ENCODE measurements at regions of chr2 and their contacts with region 1.

Region 1: DNA sequence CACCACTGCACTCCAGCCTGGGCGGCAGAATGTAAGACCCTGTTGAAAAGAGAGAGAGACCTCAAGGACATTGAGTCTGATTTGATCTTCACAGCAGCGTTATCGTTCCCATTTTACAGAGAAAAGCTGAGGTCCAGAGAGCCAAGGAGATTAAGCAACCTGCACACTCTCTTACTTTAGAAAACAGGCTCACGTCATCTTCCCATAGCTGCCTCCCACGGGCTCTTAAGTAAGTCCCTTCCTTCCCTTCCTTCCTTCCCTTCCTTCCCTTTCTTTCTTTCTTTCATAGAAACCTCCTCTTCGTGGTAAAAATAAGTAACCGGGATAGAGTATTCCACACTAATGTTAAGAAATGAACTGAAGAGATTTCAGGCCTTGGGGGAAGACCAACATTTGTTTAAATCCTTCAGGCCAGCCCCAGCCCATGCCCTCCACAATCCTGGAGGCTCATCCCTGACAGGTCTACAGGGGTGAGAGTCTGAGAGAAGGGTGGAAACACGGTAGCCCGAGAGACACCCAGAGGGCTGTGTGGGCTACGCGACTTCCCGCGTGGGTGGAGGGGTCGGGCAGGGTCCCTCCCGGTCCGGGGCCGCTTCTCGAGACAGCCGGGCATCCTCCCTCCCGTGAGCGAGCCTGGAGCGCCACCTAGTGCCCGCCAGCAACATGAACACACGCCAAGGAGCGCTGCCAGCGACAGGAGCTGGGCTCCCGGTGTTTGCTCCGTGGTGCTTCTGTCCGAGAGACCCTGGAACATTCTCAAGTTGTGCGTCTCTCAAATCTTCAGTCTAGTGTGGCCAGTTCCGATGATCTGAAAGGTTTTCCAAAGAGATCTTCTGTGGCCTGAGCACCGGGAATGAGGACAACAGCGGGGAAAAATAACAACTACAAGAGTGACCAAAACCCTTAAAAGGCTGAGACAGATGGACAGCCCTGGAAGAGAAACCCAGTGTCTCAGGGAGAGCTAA is 160.3 kb downstream of the INO80D start:
- DNase-seq: peak; percentile 48
- H3K4me3 ChIP-seq: peak overlapping the region; percentile 6 to 44 (median 27)
- H3K27ac ChIP-seq: no peak overlapping the region
- H3K4me1 ChIP-seq: peaks cover 9% of the 10 kb centered on the region
- H3K27me3 ChIP-seq: peaks cover 3% of the 10 kb centered on the region
- CTCF ChIP-seq: peak; percentile 64 to 98

Region 2: DNA sequence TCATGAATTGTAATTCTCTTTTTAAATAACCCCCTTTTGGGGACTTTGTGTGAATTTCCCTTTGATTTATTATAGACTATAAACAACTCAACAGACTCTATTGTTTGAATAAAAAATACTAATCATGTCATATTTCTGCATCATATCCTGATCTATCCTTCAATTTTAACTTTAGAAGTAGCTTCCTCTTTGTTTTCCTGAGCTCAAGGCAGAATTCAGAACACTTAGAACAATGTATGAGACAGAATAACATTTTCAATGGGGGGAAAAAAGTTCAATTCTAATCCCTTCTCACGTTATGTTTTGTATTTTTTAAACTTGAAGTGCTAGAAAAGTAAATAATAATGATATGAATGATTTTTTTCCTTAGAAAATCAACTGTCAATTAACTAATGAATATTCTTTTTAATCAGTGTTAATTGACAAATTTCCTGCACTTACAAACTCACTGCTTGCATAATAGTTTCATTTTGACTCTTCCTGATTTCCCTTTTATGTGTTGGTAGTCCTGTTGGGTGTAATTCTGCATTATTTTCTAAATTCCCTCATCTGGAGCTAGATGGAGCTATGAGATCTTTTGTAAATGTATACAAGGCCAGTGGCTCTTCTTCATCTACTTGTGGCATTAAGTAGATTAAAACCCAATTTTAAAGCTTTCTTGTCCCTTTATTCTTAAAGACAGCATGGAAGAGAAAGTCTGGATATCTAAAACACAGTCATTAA is 1054.3 kb before region 1 on chr2:
- CTCF ChIA-PET with region 1: interaction called, 3 read pairs
- dilution Hi-C with region 1: no loop called
- in situ Hi-C with region 1: no loop called
- intact Hi-C with region 1: loop called (anchors 5 kb)
- DNase-seq: peak; percentile 11
- H3K4me3 ChIP-seq: no peak overlapping the region
- H3K27ac ChIP-seq: no peak overlapping the region
- H3K4me1 ChIP-seq: no peaks in the 10 kb centered on the region
- H3K27me3 ChIP-seq: no peaks in the 10 kb centered on the region
- CTCF ChIP-seq: peak in 1 of 2 donors; percentile 42

Region 3: DNA sequence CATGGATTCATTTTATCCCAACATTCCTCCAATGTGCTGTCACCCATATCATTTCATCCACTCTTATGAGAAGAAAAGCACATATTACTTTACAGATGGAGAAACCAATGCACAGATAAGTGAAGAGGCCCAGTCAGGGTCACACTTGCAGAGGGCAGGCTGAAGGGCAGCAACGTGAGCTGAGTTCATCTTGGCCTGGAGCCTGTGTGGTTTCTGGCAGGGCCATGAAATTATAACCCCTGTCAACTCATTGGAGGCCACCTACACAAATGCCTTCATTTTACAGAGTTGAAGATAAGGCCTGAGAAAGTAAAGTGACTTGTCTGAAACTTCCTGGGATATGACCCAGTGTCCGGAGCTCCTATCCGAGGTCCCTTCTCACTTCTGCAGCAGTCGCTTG is 331.8 kb before region 1 on chr2:
- CTCF ChIA-PET with region 1: no interaction called
- dilution Hi-C with region 1: no loop called
- in situ Hi-C with region 1: no loop called
- intact Hi-C with region 1: loop called (anchors 1 kb)
- DNase-seq: no peak
- H3K4me3 ChIP-seq: no peak overlapping the region
- H3K27ac ChIP-seq: no peak overlapping the region
- H3K4me1 ChIP-seq: peaks cover 7% of the 10 kb centered on the region
- H3K27me3 ChIP-seq: no peaks in the 10 kb centered on the region
- CTCF ChIP-seq: no peak

Region 4: GRCh38 chr2:205814039-205814364 is 111.7 kb before region 1 on chr2:
- CTCF ChIA-PET with region 1: no interaction called
- dilution Hi-C with region 1: no loop called
- in situ Hi-C with region 1: no loop called
- intact Hi-C with region 1: loop called (anchors 2 kb)
- DNase-seq: peak; percentile 68
- H3K4me3 ChIP-seq: no peak overlapping the region
- H3K27ac ChIP-seq: peak overlapping the region; percentile 44
- H3K4me1 ChIP-seq: peaks cover 12% of the 10 kb centered on the region
- H3K27me3 ChIP-seq: no peaks in the 10 kb centered on the region
- CTCF ChIP-seq: peak in 1 of 2 donors; percentile 24

Region 5: GRCh38 chr2:206011795-206012194 is 86.1 kb after region 1 on chr2:
- CTCF ChIA-PET with region 1: no interaction called
- dilution Hi-C with region 1: no loop called
- in situ Hi-C with region 1: no loop called
- intact Hi-C with region 1: no loop called
- DNase-seq: peak; percentile 51
- H3K4me3 ChIP-seq: no peak overlapping the region
- H3K27ac ChIP-seq: no peak overlapping the region
- H3K4me1 ChIP-seq: no peaks in the 10 kb centered on the region
- H3K27me3 ChIP-seq: no peaks in the 10 kb centered on the region
- CTCF ChIP-seq: no peak

Region 6: DNA sequence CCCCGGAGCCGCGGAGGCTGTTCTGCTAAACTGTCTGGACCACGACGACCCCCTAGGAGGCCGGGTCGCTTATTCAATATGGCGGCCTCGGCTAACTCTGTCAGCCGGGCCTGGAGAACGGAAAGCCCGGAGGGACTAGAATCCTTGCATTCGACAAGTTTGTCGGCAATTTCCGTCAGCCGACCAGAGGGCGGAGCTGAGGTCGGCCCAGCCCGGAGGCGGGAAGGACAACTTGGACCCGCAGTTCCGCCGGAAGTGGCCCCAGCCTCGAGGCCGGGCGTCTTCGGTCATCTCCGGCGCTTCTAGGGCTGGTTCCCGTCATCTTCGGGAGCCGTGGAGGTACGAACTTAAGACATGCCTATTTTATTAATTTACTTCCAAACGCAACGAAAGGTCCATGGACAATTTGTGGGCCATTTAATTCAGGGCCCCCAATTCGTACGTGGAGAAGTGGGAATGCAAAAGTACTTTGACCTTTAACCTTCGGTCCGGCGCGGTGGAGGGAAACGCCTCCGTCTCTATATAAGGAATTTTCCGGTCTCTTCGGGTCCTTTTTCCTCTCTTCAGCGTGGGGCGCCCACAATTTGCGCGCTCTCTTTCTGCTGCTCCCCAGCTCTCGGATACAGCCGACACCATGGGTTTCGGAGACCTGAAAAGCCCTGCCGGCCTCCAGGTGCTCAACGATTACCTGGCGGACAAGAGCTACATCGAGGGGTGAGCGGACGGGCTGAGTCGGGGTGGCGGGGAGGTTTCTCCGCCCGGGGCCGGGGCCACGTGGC is 233.9 kb after region 1 on chr2 and contains the starts of genes EEF1B2 and NDUFS1:
- CTCF ChIA-PET with region 1: no interaction called
- dilution Hi-C with region 1: no loop called
- in situ Hi-C with region 1: no loop called
- intact Hi-C with region 1: no loop called
- DNase-seq: peak; percentile 97
- H3K4me3 ChIP-seq: peak within 1 kb of the TSS; percentile 84 to 95 (median 86)
- H3K27ac ChIP-seq: peak within 1 kb of the TSS; percentile 77
- H3K4me1 ChIP-seq: peaks cover 31% of the 10 kb centered on the region
- H3K27me3 ChIP-seq: no peaks in the 10 kb centered on the region
- CTCF ChIP-seq: no peak
- total RNA-seq, gene EEF1B2: 390 to 583 TPM
- total RNA-seq, gene NDUFS1: 74.6 to 80.9 TPM

Region 7: GRCh38 chr2:206212673-206213513 is 287.2 kb after region 1 on chr2:
- CTCF ChIA-PET with region 1: no interaction called
- dilution Hi-C with region 1: no loop called
- in situ Hi-C with region 1: no loop called
- intact Hi-C with region 1: no loop called
- DNase-seq: peak; percentile 43
- H3K4me3 ChIP-seq: peak overlapping the region; percentile 21 to 32 (median 24)
- H3K27ac ChIP-seq: peak overlapping the region; percentile 28
- H3K4me1 ChIP-seq: peaks cover 30% of the 10 kb centered on the region
- H3K27me3 ChIP-seq: no peaks in the 10 kb centered on the region
- CTCF ChIP-seq: no peak

Measured in mammary epithelial cell (primary cell).